ENCODE measurements at regions of chr7 and their contacts with region 1.

Region 1: DNA sequence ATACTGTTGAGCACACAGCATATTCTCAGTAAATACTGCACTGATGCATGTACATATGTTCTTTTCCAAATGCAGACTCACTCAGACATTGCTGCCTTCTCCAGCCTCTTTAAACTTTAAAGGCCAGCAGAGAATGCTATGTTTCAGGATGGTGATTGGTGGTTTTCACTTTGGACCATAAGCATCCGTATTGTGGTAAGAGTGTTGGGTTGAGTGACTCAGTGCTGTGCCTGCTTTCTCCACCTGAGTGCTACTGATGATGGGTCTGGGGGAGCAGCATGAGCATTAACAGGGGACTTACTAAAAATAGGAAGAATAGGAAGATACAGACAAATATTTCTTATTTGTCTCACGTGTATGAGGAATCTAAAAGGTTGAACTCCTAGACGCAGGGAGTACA is 56.3 kb upstream of the ZNF92 start:
- DNase-seq: no peak
- H3K27ac ChIP-seq: no peak overlapping the region
- CTCF ChIP-seq: no peak

Region 2: DNA sequence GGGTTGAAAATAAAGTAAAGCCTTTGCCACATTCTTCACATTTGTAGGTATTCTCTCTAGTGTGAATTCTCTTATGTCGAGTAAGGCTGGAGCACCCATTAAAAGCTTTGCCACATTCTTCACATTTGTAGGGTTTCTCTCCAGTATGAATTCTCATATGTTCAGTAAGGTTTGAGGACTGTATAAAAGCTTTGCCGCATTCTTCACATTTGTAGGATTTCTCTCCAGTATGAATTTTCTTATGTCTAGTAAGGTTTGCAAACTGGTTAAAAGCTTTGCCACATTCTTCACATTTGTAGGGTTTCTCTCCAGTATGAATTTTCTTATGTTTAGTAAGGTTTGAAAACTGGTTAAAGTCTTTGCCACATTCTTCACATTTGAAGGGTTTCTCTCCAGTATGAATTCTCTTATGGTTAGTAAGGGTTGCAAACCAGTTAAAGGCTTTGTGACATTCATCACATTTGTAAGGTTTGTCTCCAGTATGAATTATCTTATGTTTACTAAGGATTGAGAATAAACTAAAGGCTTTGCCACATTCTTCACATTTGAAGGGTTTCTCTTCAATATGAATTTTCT is 795.9 kb before region 1 on chr7:
- CTCF ChIA-PET with region 1: no interaction called
- POLR2A ChIA-PET with region 1: no interaction called
- DNase-seq: no peak
- H3K27ac ChIP-seq: no peak overlapping the region
- CTCF ChIP-seq: no peak

Region 3: GRCh38 chr7:64869912-64870562 is 447.3 kb before region 1 on chr7:
- CTCF ChIA-PET with region 1: no interaction called
- POLR2A ChIA-PET with region 1: no interaction called
- DNase-seq: no peak
- H3K27ac ChIP-seq: no peak overlapping the region
- CTCF ChIP-seq: no peak

Region 4: GRCh38 chr7:65373608-65374351 is 56.4 kb after region 1 on chr7 and contains the start of gene ZNF92:
- CTCF ChIA-PET with region 1: interaction called, 11 read pairs
- POLR2A ChIA-PET with region 1: no interaction called
- DNase-seq: peak; percentile 99
- H3K27ac ChIP-seq: peak within 1 kb of the TSS; percentile 92
- CTCF ChIP-seq: no peak